ENCODE measurements at regions of chr22 and their contacts with region 1.

Region 1: DNA sequence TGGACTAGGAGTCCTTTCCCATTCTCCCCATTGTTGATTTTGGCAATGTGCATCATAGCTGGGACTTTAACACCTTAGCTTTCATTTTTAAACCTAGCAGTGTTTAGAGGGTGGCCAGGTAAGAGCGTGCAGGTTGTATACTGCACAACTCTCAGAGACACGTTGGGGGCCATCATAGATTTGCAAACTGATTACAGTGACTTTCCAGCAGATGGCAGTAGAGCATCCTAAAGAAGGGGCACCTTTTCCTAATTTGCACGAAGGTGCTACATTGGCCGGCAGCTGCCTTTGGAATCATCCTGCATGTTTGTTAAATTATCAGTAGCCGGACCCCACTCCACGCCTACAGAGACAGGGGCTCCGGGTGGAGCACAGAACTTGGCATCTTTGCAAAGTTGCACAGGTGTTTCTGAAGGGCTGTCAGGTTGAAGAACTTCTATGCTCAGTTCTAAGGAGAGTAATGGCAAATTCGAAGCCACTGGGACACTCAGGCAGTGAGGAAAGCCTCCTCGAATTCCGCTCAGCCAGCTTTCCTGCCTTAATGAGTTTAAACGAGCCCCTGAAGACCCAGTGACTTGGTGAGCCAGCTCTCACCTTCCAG is 7.7 kb downstream of the LHFPL7 start:
- DNase-seq: peak; percentile 53
- H3K4me3 Mint-ChIP-seq: no peak overlapping the region
- H3K27ac Mint-ChIP-seq: no peak overlapping the region
- H3K4me1 Mint-ChIP-seq: no peaks in the 10 kb centered on the region
- H3K27me3 Mint-ChIP-seq: peaks cover 8% of the 10 kb centered on the region

Region 2: GRCh38 chr22:24951942-24952836 is 13.3 kb after region 1 on chr22 and contains the start of gene KIAA1671:
- CTCF ChIA-PET with region 1: interaction called, 13 read pairs
- DNase-seq: peak; percentile 90
- H3K4me3 Mint-ChIP-seq: peak within 1 kb of the TSS; percentile 76
- H3K27ac Mint-ChIP-seq: peak within 1 kb of the TSS; percentile 47
- H3K4me1 Mint-ChIP-seq: peaks cover 33% of the 10 kb centered on the region
- H3K27me3 Mint-ChIP-seq: peaks cover 75% of the 10 kb centered on the region

Region 3: GRCh38 chr22:25027959-25028840 is 89.4 kb after region 1 on chr22:
- CTCF ChIA-PET with region 1: interaction called, 11 read pairs
- DNase-seq: peak; percentile 38
- H3K4me3 Mint-ChIP-seq: no peak overlapping the region
- H3K27ac Mint-ChIP-seq: no peak overlapping the region
- H3K4me1 Mint-ChIP-seq: peaks cover 26% of the 10 kb centered on the region
- H3K27me3 Mint-ChIP-seq: peaks cover 15% of the 10 kb centered on the region

Region 4: GRCh38 chr22:25048659-25049647 is 110.1 kb after region 1 on chr22:
- CTCF ChIA-PET with region 1: interaction called, 88 read pairs
- DNase-seq: peak; percentile 83
- H3K4me3 Mint-ChIP-seq: no peak overlapping the region
- H3K27ac Mint-ChIP-seq: no peak overlapping the region
- H3K4me1 Mint-ChIP-seq: peaks cover 4% of the 10 kb centered on the region
- H3K27me3 Mint-ChIP-seq: peaks cover 11% of the 10 kb centered on the region

Measured in activated naive CD4-positive, alpha-beta T cell treated with anti-CD3 and anti-CD28 coated beads, Interleukin-2, amount 10 ng/mL, durations not matched to agents 7 days and 5 days (primary cell).